Head of caudate nucleus (tissue), 42 donors: ENCODE measurements at regions of chr5 and their contacts with region 1.

Region 1: DNA sequence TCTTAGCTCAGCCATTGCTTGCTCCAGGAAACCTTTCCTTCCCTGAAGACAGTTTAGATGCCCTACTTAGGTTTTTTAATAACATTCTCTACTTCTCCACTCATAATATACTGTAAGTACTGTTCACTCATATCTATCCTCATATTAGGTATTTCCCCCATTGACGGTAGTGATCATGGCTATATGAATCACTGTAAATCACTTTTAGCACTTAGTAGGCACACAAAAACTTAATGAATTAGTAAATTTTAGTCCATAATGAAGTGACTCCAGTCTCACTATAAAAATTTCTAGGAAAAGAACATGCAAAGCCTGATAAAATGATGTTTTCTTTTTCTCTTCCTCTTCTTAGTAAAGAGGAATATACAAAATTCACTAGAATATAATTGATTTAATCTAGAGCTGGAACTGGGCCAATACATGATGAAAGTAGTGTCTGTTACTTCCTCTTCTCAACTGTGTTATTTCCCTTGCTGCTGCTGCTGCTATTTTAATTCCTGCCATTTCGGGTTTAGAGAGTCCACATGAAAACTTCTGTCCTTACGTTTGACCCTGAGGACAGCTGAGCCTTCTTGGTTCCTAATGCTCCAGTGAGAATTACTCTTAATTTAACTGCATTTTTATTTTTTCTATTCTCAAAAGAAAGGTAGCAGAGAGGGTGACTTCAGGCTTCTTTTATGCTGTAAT is 73.5 kb downstream of the LNPEP start:
- DNase-seq: peak in 1 of 42 donors; percentile 3

Region 2: GRCh38 chr5:96963267-96963666 is 46.1 kb before region 1 on chr5:
- intact Hi-C with region 1: no loop called
- DNase-seq: peak in 21 of 42 donors; percentile 6 to 67 (median 29)

Region 3: GRCh38 chr5:97142521-97143254 is 133.3 kb after region 1 on chr5 and contains the start of gene LIX1:
- intact Hi-C with region 1: loop called (anchors 10 kb)
- DNase-seq: peak; percentile 18 to 84 (median 64)